CD4-positive, alpha-beta memory T cell (primary cell): ENCODE measurements at regions of chr16 and their contacts with region 1.

Region 1: GRCh38 chr16:11407047-11407982 is 62.1 kb downstream of the RMI2 start:
- DNase-seq: peak; percentile 61 to 75 (median 67)
- H3K4me3 ChIP-seq: no peak overlapping the region
- H3K4me3 Mint-ChIP-seq: peak overlapping the region in 1 of 8 donors; percentile 48
- H3K27ac ChIP-seq: no peak overlapping the region
- H3K27ac Mint-ChIP-seq: peak overlapping the region in 2 of 7 donors; percentile 80 to 84
- H3K4me1 ChIP-seq: no peaks in the 10 kb centered on the region
- H3K4me1 Mint-ChIP-seq: peaks cover 0 to 6% (median 4%) of the 10 kb centered on the region in 4 donors
- H3K27me3 ChIP-seq: no peaks in the 10 kb centered on the region
- H3K27me3 Mint-ChIP-seq: no peaks in the 10 kb centered on the region

Region 2: DNA sequence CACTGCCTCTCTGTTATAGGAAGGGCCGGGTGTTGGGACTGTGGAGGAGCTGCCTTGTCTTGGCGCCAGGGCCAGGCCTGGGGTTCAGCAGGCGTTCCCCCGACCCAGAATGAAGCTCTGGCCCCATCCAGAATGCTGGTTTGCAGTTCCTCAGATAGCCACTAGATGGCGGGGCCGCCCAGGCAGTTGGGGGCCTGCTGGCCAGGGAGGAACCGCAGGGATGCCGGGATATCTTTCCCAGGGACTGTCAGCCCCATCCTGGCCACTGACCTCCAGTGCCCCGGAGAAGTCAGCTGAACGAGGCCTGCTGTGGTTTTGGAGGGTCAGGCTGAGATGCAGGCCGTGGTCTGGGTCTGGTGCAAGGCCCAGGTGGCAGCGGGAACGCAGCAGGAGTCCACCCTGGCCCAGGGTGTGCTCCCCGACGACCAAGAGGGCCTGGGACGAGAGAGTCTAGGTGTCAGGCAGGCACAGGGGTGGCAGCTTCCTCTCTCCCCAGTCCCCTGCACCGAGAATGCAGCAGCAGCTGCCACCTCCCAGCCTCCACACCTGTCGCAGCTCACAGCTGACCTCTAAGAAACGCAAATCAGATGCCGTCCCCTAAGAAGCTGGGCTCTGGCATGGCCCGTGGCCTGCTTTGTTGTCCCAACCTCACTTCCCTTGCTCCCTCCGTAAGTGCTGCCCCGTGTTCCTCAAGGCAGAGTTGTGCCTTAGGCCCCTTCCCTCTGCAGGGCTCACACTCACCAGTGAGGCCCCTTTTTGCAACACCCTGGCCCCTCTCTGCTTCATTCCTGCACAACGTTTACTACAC is 10.9 kb before region 1 on chr16:
- CTCF ChIA-PET with region 1: interaction called, 44 read pairs
- POLR2A ChIA-PET with region 1: no interaction called
- intact Hi-C with region 1: no loop called
- DNase-seq: peak; percentile 51 to 65 (median 54)
- H3K4me3 ChIP-seq: no peak overlapping the region
- H3K4me3 Mint-ChIP-seq: no peak overlapping the region
- H3K27ac ChIP-seq: no peak overlapping the region
- H3K27ac Mint-ChIP-seq: peak overlapping the region in 1 of 7 donors; percentile 24
- H3K4me1 ChIP-seq: peaks cover 5% of the 10 kb centered on the region
- H3K4me1 Mint-ChIP-seq: peaks cover 0 to 5% (median 1%) of the 10 kb centered on the region in 4 donors
- H3K27me3 ChIP-seq: no peaks in the 10 kb centered on the region
- H3K27me3 Mint-ChIP-seq: no peaks in the 10 kb centered on the region

Region 3: DNA sequence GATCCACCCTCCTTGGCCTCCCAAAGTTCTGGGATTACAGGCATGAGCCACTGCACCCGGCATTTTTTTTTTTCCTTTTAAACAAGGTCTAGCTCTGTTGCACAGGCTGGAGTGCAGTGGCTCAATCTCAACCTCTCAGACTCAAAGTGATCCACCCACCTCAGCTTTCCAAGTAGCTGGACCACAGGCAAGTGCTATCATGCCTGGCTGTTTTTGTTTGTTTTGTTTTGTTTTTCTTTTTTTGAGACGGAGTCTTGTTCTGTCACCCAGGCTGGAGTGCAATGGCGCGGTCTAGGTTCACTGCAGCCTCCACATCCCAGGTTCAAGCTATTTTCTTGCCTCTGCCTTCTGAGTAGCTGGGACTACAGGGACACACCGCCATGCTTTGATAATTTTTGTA is 408.8 kb after region 1 on chr16:
- CTCF ChIA-PET with region 1: interaction called, 20 read pairs
- POLR2A ChIA-PET with region 1: no interaction called
- intact Hi-C with region 1: loop called (anchors 1 kb)
- DNase-seq: no peak
- H3K4me3 ChIP-seq: no peak overlapping the region
- H3K4me3 Mint-ChIP-seq: no peak overlapping the region
- H3K27ac ChIP-seq: no peak overlapping the region
- H3K27ac Mint-ChIP-seq: no peak overlapping the region
- H3K4me1 ChIP-seq: no peaks in the 10 kb centered on the region
- H3K4me1 Mint-ChIP-seq: peaks cover 2 to 5% (median 4%) of the 10 kb centered on the region in 4 donors
- H3K27me3 ChIP-seq: no peaks in the 10 kb centered on the region
- H3K27me3 Mint-ChIP-seq: peaks cover 0 to 2% of the 10 kb centered on the region in 2 donors

Region 4: DNA sequence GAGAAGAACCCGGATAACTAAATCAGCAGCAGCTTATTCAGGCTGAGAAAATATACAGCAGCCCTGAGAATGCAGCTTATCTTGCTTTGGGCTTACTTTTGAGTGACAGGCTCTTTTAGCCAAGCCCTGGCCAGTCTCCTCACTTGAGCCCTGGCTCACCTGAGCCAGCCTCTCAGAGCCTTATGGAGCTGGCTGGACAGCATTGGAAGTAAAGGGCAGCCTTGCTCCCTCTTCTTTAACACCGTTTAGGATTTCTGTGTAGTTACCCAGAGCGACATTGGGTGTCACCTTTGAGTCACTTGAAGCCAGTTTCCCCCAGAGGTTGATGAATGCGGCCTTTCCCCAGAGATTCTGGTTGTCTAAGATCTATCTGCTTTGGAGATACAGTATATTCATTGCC is 542.2 kb after region 1 on chr16:
- CTCF ChIA-PET with region 1: no interaction called
- POLR2A ChIA-PET with region 1: no interaction called
- intact Hi-C with region 1: no loop called
- DNase-seq: peak in 3 of 5 donors; percentile 4 to 5 (median 5)
- H3K4me3 ChIP-seq: no peak overlapping the region
- H3K4me3 Mint-ChIP-seq: no peak overlapping the region
- H3K27ac ChIP-seq: no peak overlapping the region
- H3K27ac Mint-ChIP-seq: no peak overlapping the region
- H3K4me1 ChIP-seq: no peaks in the 10 kb centered on the region
- H3K4me1 Mint-ChIP-seq: no peaks in the 10 kb centered on the region
- H3K27me3 ChIP-seq: no peaks in the 10 kb centered on the region
- H3K27me3 Mint-ChIP-seq: no peaks in the 10 kb centered on the region